Breast epithelium (tissue), 4 donors: ENCODE measurements at regions of chr4 and their contacts with region 1.

Region 1: DNA sequence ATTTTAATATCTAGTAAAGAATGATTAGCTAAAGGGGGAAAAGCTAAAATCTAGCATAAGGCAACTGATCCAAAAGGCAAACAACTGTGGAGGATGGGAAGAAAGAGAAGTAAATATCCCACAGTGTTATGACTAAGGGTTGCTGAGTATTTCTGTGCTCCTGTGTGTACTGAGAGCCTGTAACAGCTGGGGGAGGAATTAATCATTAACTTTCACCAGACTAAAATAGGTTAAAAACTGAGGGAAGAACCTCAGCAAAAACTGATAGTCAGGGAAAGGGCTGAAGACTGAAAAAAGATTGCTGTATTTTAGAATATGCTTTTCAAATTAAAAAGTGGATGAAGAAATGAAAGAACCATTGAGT is 365.9 kb downstream of the CXXC4 start:
- DNase-seq: no peak
- H3K4me3 ChIP-seq: no peak overlapping the region
- H3K27ac ChIP-seq: no peak overlapping the region
- H3K4me1 ChIP-seq: no peaks in the 10 kb centered on the region
- H3K27me3 ChIP-seq: no peaks in the 10 kb centered on the region
- CTCF ChIP-seq: no peak
- POLR2A ChIP-seq: no peak

Region 2: DNA sequence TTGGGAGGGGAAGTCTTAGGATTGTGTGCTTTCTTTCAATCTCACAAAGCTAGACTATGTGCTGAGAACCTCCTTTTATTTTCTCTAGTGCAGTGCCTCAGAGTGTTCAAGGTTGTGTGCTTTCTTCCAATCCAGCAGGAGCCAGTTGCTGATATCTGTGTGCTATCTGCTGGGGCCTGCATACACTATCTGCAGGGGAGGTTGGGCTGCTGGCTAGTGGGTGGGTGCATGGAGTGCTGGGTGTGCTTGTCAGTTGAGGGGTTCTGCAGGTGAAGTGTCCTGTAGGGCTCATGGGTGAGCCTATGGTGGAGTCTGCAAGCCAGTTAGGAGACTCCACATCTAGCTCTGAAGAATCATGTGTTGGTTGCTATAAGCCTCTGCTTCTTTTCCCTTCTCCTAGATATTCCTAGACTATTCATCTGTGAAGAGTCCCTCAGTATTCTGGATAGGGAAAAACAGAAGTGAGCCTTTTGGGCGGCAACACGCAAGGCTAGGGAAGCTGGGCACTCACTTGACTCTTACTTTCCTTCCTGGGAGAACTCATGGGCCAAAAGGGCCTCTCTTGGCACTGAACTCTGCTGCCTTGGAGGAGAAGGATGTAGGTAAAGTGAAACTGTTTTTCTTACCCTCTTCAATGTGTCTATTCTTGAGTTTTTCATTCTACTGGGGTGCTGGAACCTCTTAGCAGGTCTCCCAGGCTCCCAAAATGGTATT is 1268.1 kb before region 1 on chr4:
- intact Hi-C with region 1: no loop called
- DNase-seq: no peak
- H3K4me3 ChIP-seq: no peak overlapping the region
- H3K27ac ChIP-seq: no peak overlapping the region
- H3K4me1 ChIP-seq: no peaks in the 10 kb centered on the region
- H3K27me3 ChIP-seq: no peaks in the 10 kb centered on the region
- CTCF ChIP-seq: no peak
- POLR2A ChIP-seq: no peak

Region 3: GRCh38 chr4:104146048-104146447 is 17.2 kb after region 1 on chr4:
- intact Hi-C with region 1: loop called (anchors 2 kb)
- DNase-seq: no peak
- H3K4me3 ChIP-seq: no peak overlapping the region
- H3K27ac ChIP-seq: no peak overlapping the region
- H3K4me1 ChIP-seq: no peaks in the 10 kb centered on the region
- H3K27me3 ChIP-seq: no peaks in the 10 kb centered on the region
- CTCF ChIP-seq: no peak
- POLR2A ChIP-seq: no peak

Region 4: DNA sequence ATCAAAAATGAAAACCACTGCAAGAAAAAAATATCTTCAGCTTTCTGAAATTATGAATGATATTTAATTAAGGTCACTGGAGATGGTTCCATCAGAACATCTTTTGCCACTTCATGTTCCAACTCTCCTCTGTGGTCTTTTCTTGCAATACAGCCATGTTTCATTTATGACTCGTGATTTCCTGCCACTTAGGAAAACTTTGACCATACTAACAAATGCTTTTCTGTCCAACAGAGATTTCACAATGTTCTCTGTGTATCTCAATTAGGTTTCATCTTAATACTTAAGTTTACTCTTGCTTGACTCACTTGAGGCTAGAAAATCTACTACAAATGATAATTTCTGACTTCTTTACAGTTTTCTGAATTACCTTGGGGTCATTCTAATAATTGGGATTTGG is 35.0 kb after region 1 on chr4:
- intact Hi-C with region 1: no loop called
- DNase-seq: no peak
- H3K4me3 ChIP-seq: no peak overlapping the region
- H3K27ac ChIP-seq: no peak overlapping the region
- H3K4me1 ChIP-seq: no peaks in the 10 kb centered on the region
- H3K27me3 ChIP-seq: no peaks in the 10 kb centered on the region
- CTCF ChIP-seq: no peak
- POLR2A ChIP-seq: no peak